WTC11 (cell line): ENCODE measurements at regions of chr10 and their contacts with region 1.

Region 1: GRCh38 chr10:97072851-97073665 is 112.7 kb downstream of the SLIT1 start:
- DNase-seq: peak; percentile 91
- ATAC-seq: peak; percentile 76
- H3K4me3 Mint-ChIP-seq: no peak overlapping the region
- H3K27ac Mint-ChIP-seq: no peak overlapping the region
- H3K4me1 Mint-ChIP-seq: peaks cover 17% of the 10 kb centered on the region
- H3K27me3 Mint-ChIP-seq: no peaks in the 10 kb centered on the region
- CTCF ChIP-seq: peak; percentile 96

Region 2: DNA sequence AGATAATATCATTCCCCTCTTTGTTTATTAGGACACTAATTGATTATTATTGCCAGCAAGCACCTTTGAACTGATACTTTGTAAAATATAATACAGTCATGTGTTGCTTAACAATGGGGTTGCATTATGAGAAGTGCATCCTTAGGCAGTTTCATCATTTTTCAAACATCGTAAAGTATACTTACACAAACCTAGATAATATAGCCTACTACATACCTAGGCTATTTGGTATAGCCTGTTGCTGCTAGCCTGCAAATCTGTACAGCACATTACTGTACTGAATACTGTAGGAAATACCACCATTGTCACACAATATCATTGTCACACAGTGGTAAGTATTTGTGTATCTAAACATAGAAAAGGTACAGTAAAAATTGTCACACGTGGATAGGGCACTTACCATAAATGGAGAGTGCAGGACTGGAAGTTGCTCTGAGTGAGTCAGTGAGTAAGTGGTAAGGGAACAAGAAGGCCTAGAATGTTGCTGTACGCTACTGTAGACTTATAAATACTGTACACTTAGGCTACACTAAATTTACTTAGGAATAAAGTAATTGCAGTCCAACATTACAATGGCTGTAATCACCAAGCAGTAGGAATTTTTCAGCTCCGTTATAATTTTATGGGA is 170.2 kb before region 1 on chr10:
- CTCF ChIA-PET with region 1: no interaction called
- POLR2A ChIA-PET with region 1: no interaction called
- DNase-seq: no peak
- ATAC-seq: no peak
- H3K4me3 Mint-ChIP-seq: no peak overlapping the region
- H3K27ac Mint-ChIP-seq: no peak overlapping the region
- H3K4me1 Mint-ChIP-seq: peaks cover 30% of the 10 kb centered on the region
- H3K27me3 Mint-ChIP-seq: no peaks in the 10 kb centered on the region
- CTCF ChIP-seq: no peak

Region 3: GRCh38 chr10:97037365-97038361 is 35.4 kb before region 1 on chr10:
- CTCF ChIA-PET with region 1: interaction called, 49 read pairs
- POLR2A ChIA-PET with region 1: no interaction called
- DNase-seq: peak; percentile 95
- ATAC-seq: peak; percentile 94
- H3K4me3 Mint-ChIP-seq: peak overlapping the region; percentile 45
- H3K27ac Mint-ChIP-seq: no peak overlapping the region
- H3K4me1 Mint-ChIP-seq: peaks cover 28% of the 10 kb centered on the region
- H3K27me3 Mint-ChIP-seq: peaks cover 5% of the 10 kb centered on the region
- CTCF ChIP-seq: peak; percentile 92

Region 4: DNA sequence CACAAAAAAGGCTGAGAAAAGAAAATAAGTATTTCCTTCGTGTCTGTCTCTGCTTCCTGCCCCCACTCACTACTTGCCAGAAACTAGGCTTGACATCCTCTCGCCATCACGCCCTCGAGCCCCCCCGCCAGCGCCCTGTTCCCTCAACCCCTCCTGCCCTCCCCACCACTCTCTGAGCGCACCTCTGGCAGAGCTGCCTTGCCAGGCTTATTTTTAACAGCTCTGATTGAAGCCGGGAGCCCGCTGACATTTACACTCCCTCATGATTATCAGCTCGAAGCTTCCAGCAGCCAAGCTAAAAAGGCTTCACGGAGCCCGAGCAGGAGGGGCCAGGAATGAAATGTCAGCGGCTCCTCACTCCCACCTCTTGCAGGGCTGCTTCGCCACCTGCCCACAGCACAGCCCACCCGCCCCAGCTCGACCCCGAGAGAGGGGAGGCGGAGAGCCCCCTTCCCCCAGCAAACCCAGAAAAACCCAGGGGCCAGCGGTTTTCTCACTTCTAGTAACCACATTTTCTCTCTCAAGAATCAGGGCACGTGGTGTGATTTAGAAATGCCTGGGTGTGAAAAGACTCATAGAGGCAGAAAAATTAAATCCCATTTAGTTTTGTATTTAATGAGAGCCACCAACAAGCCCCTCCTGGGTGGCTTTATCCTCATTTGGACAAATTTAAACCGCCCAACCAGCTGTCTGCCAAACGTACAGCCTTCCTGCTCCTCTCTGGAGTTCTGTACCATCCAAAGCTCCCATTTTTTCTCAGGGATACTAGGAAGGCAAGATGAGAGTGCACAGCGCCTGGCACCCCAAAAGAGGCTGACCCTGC is 23.4 kb after region 1 on chr10:
- CTCF ChIA-PET with region 1: interaction called, 16 read pairs
- POLR2A ChIA-PET with region 1: no interaction called
- DNase-seq: no peak
- ATAC-seq: no peak; the same call in 1 of the 2 replicates
- H3K4me3 Mint-ChIP-seq: no peak overlapping the region
- H3K27ac Mint-ChIP-seq: peak overlapping the region; percentile 63; the same call in 1 of the 2 replicates
- H3K4me1 Mint-ChIP-seq: peaks cover 22% of the 10 kb centered on the region
- H3K27me3 Mint-ChIP-seq: no peaks in the 10 kb centered on the region; the same call in 1 of the 2 replicates
- CTCF ChIP-seq: no peak

Region 5: GRCh38 chr10:97128516-97129154 is 55.6 kb after region 1 on chr10:
- CTCF ChIA-PET with region 1: interaction called, 14 read pairs
- POLR2A ChIA-PET with region 1: no interaction called
- DNase-seq: no peak
- ATAC-seq: no peak
- H3K4me3 Mint-ChIP-seq: no peak overlapping the region
- H3K27ac Mint-ChIP-seq: no peak overlapping the region
- H3K4me1 Mint-ChIP-seq: no peaks in the 10 kb centered on the region
- H3K27me3 Mint-ChIP-seq: no peaks in the 10 kb centered on the region
- CTCF ChIP-seq: no peak

Region 6: DNA sequence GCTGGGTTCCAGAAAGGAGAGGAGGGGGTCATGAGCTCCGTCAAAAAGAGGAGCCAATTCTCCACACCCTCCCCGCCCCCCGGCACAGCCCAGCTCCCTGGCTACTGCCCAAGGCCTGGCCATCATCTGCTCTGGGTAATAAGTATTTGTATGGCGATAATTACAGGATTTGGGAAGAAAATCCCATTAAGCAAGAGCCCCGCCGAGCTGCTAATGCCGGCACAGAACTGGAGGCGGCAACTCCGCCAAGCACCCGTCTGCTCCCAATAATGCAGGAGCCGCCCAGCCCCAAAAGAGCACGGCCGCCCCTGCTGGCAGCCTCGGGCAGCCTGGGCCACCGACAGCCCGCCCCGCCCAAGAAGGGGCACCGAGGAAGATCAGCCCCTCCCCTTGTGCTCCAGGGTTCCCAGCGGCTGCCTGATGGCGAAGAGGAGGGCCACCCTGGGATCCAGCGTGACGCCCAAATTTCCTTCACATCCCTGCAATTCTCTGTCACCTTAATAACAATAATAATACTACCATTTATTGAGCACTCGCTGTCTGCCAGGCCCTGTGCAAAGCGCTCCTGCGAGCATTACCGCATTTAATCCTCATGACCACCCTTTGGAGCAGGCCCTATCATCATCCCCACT is 106.8 kb after region 1 on chr10:
- CTCF ChIA-PET with region 1: interaction called, 46 read pairs
- POLR2A ChIA-PET with region 1: no interaction called
- DNase-seq: peak; percentile 82
- ATAC-seq: peak; percentile 97
- H3K4me3 Mint-ChIP-seq: peak overlapping the region; percentile 57
- H3K27ac Mint-ChIP-seq: no peak overlapping the region
- H3K4me1 Mint-ChIP-seq: peaks cover 15% of the 10 kb centered on the region
- H3K27me3 Mint-ChIP-seq: peaks cover 36% of the 10 kb centered on the region
- CTCF ChIP-seq: no peak

Region 7: DNA sequence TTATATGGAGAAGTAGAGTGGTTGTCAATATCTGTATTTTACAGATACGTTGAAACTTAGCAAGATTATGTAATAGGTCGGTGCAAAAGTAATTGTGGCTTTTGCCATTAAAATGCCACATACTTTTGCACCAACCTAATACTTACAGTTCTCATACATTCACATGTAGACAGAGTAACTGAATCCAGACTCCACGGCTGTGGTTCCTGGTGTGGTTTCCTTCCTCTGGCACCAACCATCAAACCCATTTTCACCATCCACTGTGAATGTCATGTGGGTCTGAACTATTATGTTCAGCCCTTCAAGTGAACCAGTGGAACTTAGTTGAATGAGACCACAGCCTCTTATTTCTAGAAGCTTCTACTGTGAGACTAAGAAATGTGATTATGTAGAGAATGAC is 144.2 kb after region 1 on chr10:
- CTCF ChIA-PET with region 1: interaction called, 364 read pairs
- POLR2A ChIA-PET with region 1: interaction called, 3 read pairs
- DNase-seq: no peak
- ATAC-seq: no peak
- H3K4me3 Mint-ChIP-seq: no peak overlapping the region
- H3K27ac Mint-ChIP-seq: no peak overlapping the region
- H3K4me1 Mint-ChIP-seq: no peaks in the 10 kb centered on the region; the same call in 1 of the 2 replicates
- H3K27me3 Mint-ChIP-seq: no peaks in the 10 kb centered on the region
- CTCF ChIP-seq: no peak

Region 8: GRCh38 chr10:97334370-97335175 is 261.5 kb after region 1 on chr10 and contains the start of gene FRAT2:
- CTCF ChIA-PET with region 1: interaction called, 14 read pairs
- POLR2A ChIA-PET with region 1: no interaction called
- DNase-seq: peak; percentile 93
- ATAC-seq: peak; percentile 17
- H3K4me3 Mint-ChIP-seq: peak within 1 kb of the TSS; percentile 86
- H3K27ac Mint-ChIP-seq: peak within 1 kb of the TSS; percentile 97
- H3K4me1 Mint-ChIP-seq: peaks cover 62% of the 10 kb centered on the region
- H3K27me3 Mint-ChIP-seq: no peaks in the 10 kb centered on the region
- CTCF ChIP-seq: no peak
- total RNA-seq, gene FRAT2: 48.2 to 53.5 TPM (median 50.8 TPM) in 3 replicates